Activated T-helper 2 cell treated with anti-CD3 and anti-CD28 coated beads, Interferon-gamma antibody, Interleukin-2, Interleukin-4, amounts not matched to agents 10 μg/mL and 5 μg/mL and 100 μg/mL, durations not matched to agents 14 hours and 24 hours and 36 hours (primary cell): ENCODE measurements at regions of chr1 and their contacts with region 1.

Region 1: DNA sequence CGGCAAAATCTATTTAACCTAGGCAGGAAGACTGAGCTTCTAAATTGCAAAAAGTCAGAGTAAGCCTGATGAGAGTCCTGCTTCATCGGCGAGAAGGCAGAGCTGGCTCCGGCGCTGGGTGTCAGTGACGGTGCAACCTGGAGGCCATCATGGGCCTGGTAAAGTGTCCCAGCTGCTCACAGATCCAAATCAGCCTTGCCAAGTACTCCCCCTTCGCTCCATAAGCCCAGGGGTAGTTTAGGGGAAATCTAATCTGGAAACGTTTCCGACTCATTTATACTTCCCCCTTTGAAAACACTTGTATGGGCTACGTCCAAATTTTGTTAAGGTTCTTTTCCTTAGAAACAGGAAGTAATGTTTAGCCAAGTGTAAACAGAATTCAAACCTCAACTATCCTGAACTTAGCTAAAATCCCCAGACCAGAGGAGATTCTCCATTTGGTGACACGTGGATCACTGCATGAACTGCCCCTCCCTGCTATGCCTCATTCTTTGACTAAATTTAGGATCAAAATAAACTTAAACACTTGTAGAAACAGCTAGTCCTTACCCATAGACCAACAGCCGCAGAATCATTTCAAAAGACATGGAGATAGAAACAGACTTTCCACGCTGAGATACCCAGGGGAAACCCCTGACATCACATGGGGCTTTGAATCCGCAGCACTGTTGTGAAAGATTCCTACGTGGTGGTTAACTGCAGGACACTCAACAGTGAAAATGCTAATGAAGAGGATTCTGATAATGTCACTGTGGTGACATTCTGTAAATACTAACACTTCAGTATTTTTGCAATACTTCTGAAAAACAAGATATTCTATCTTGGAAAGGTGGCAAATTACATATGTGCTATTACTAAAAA is 172.7 kb downstream of the TGFBR3 start:
- DNase-seq: peak; percentile 26
- H3K4me3 Mint-ChIP-seq: peak overlapping the region; percentile 60
- H3K27ac Mint-ChIP-seq: peak overlapping the region; percentile 89
- H3K4me1 Mint-ChIP-seq: peaks cover 64% of the 10 kb centered on the region
- H3K27me3 Mint-ChIP-seq: no peaks in the 10 kb centered on the region

Region 2: DNA sequence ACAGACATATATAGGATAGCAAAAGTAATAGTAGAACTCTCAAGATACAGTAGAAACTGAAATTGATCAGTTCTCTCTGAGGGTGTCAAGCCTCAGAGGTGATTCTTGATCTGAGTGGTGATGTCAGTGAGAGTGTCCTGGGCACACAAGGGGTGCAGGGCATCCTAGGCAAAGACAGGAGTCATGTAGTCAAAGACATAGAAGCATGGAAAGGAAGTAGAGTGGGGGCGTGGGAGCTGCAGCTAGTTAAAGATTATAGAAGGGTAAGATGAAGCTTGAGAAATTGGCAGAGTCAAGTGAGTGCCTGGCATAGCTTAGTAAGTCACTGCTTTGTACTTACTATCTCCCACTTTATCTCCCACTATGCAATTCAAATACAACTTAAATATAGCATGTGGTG is 189.7 kb before region 1 on chr1:
- intact Hi-C with region 1: loop called (anchors 1 kb)
- DNase-seq: no peak
- H3K4me3 Mint-ChIP-seq: no peak overlapping the region
- H3K27ac Mint-ChIP-seq: peak overlapping the region; percentile 38
- H3K4me1 Mint-ChIP-seq: peaks cover 47% of the 10 kb centered on the region
- H3K27me3 Mint-ChIP-seq: no peaks in the 10 kb centered on the region

Region 3: GRCh38 chr1:91604632-91605031 is 108.6 kb before region 1 on chr1:
- intact Hi-C with region 1: loop called (anchors 5 kb)
- DNase-seq: no peak
- H3K4me3 Mint-ChIP-seq: no peak overlapping the region
- H3K27ac Mint-ChIP-seq: no peak overlapping the region
- H3K4me1 Mint-ChIP-seq: peaks cover 22% of the 10 kb centered on the region
- H3K27me3 Mint-ChIP-seq: peaks cover 2% of the 10 kb centered on the region

Region 4: GRCh38 chr1:91673613-91674012 is 39.6 kb before region 1 on chr1:
- intact Hi-C with region 1: loop called (anchors 1 kb)
- DNase-seq: no peak
- H3K4me3 Mint-ChIP-seq: no peak overlapping the region
- H3K27ac Mint-ChIP-seq: peak overlapping the region; percentile 71
- H3K4me1 Mint-ChIP-seq: peaks cover 33% of the 10 kb centered on the region
- H3K27me3 Mint-ChIP-seq: no peaks in the 10 kb centered on the region

Region 5: GRCh38 chr1:91697416-91697815 is 15.8 kb before region 1 on chr1:
- intact Hi-C with region 1: loop called (anchors 1 kb)
- DNase-seq: peak; percentile 73
- H3K4me3 Mint-ChIP-seq: peak overlapping the region; percentile 61
- H3K27ac Mint-ChIP-seq: peak overlapping the region; percentile 89
- H3K4me1 Mint-ChIP-seq: peaks cover 61% of the 10 kb centered on the region
- H3K27me3 Mint-ChIP-seq: no peaks in the 10 kb centered on the region

Region 6: GRCh38 chr1:91732291-91733107 is 19.3 kb after region 1 on chr1:
- intact Hi-C with region 1: loop called (anchors 1 kb)
- DNase-seq: no peak
- H3K4me3 Mint-ChIP-seq: no peak overlapping the region
- H3K27ac Mint-ChIP-seq: peak overlapping the region; percentile 75
- H3K4me1 Mint-ChIP-seq: peaks cover 57% of the 10 kb centered on the region
- H3K27me3 Mint-ChIP-seq: no peaks in the 10 kb centered on the region

Region 7: DNA sequence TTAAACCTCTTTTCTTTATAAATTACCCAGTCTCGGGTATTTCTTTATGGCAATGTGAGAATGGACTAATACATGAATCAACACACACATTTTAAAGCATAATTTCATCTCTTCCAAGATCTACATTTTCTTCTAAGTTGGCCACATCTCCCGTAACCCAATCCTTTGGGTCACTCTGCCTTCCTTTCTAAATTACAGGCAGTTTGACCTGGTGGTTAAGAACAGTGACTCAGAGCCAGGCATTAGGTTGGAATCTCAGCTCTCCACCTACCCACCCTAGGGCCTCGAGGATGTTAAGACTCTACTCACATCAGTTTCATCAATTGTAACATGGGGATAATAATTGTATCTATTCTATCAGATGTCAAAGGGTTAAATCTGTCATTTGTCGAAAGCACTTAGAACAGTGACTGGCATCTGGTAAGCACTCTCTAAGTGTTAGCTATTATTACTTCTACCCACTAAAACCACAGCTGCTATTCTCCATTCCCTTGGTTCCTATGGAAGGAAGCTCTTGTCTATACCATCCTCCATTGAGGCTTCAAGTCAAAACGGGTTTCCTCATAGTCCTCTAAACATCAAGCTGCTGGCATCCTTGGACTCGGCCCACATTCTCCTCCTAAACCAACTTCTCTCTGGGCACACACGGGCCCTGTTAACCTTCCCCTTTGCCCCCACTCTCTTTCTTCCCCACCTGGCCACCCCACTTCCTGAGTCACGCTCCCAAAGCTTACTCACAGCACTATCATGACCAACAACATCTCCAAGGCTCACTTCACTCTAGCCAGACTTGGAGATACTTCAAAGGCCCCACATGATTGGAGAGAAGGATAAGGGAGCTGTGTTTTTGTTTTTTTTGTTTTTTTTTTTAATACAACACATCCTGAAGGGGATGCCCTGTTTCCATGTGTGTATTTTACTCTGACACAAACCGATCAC is 55.8 kb after region 1 on chr1:
- intact Hi-C with region 1: no loop called
- DNase-seq: no peak
- H3K4me3 Mint-ChIP-seq: no peak overlapping the region
- H3K27ac Mint-ChIP-seq: no peak overlapping the region
- H3K4me1 Mint-ChIP-seq: peaks cover 16% of the 10 kb centered on the region
- H3K27me3 Mint-ChIP-seq: no peaks in the 10 kb centered on the region